Endothelial cell of umbilical vein (primary cell): ENCODE measurements at regions of chr2 and their contacts with region 1.

Region 1: GRCh38 chr2:145007093-145007959 is 487.4 kb upstream of the ZEB2 start:
- DNase-seq: peak; percentile 91
- H3K4me3 ChIP-seq: peak overlapping the region in 1 of 3 experiments; percentile 3
- H3K27ac ChIP-seq: peak overlapping the region; percentile 80
- H3K4me1 ChIP-seq: peaks cover 38% of the 10 kb centered on the region
- H3K27me3 ChIP-seq: no peaks in the 10 kb centered on the region
- CTCF ChIP-seq: no peak
- POLR2A ChIP-seq: no peak

Region 2: DNA sequence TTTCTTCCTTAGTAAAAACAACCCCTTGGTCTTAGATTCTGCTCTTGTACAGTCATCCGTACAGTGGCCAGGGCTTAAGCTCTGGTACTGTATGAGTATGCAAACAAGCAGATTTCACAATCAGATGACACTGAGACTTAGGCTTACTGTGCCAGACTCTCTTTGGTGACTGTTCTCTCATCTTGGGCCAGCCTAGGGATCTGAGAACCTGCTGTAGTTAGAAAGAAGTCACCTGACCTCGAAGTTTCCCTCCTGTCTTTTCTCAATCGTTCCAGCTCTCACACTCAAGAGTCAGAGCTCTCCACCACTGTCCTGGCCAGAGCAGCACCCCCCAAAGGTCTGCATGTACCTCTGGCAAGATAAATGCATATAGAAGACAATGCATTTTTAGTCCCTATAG is 550.6 kb before region 1 on chr2:
- CTCF ChIA-PET with region 1: no interaction called
- POLR2A ChIA-PET with region 1: no interaction called
- dilution Hi-C with region 1: no loop called
- intact Hi-C with region 1: loop called (anchors 10 kb)
- DNase-seq: peak; percentile 64
- H3K4me3 ChIP-seq: no peak overlapping the region
- H3K27ac ChIP-seq: no peak overlapping the region
- H3K4me1 ChIP-seq: peaks cover 69% of the 10 kb centered on the region
- H3K27me3 ChIP-seq: no peaks in the 10 kb centered on the region
- CTCF ChIP-seq: no peak
- POLR2A ChIP-seq: no peak

Region 3: GRCh38 chr2:144943986-144944385 is 63.3 kb before region 1 on chr2:
- CTCF ChIA-PET with region 1: no interaction called
- POLR2A ChIA-PET with region 1: no interaction called
- dilution Hi-C with region 1: no loop called
- intact Hi-C with region 1: loop called (anchors 1 kb)
- DNase-seq: peak; percentile 78
- H3K4me3 ChIP-seq: no peak overlapping the region
- H3K27ac ChIP-seq: peak overlapping the region; percentile 95
- H3K4me1 ChIP-seq: peaks cover 49% of the 10 kb centered on the region
- H3K27me3 ChIP-seq: no peaks in the 10 kb centered on the region
- CTCF ChIP-seq: no peak
- POLR2A ChIP-seq: no peak

Region 4: GRCh38 chr2:145026456-145027455 is 19.4 kb after region 1 on chr2:
- CTCF ChIA-PET with region 1: no interaction called
- POLR2A ChIA-PET with region 1: no interaction called
- dilution Hi-C with region 1: no loop called
- intact Hi-C with region 1: no loop called
- DNase-seq: no peak
- H3K4me3 ChIP-seq: no peak overlapping the region
- H3K27ac ChIP-seq: no peak overlapping the region
- H3K4me1 ChIP-seq: no peaks in the 10 kb centered on the region
- H3K27me3 ChIP-seq: no peaks in the 10 kb centered on the region
- CTCF ChIP-seq: no peak
- POLR2A ChIP-seq: no peak

Region 5: GRCh38 chr2:145055651-145056050 is 48.3 kb after region 1 on chr2:
- CTCF ChIA-PET with region 1: no interaction called
- POLR2A ChIA-PET with region 1: no interaction called
- dilution Hi-C with region 1: no loop called
- intact Hi-C with region 1: no loop called
- DNase-seq: no peak
- H3K4me3 ChIP-seq: no peak overlapping the region
- H3K27ac ChIP-seq: no peak overlapping the region
- H3K4me1 ChIP-seq: no peaks in the 10 kb centered on the region
- H3K27me3 ChIP-seq: no peaks in the 10 kb centered on the region
- CTCF ChIP-seq: no peak
- POLR2A ChIP-seq: no peak

Region 6: DNA sequence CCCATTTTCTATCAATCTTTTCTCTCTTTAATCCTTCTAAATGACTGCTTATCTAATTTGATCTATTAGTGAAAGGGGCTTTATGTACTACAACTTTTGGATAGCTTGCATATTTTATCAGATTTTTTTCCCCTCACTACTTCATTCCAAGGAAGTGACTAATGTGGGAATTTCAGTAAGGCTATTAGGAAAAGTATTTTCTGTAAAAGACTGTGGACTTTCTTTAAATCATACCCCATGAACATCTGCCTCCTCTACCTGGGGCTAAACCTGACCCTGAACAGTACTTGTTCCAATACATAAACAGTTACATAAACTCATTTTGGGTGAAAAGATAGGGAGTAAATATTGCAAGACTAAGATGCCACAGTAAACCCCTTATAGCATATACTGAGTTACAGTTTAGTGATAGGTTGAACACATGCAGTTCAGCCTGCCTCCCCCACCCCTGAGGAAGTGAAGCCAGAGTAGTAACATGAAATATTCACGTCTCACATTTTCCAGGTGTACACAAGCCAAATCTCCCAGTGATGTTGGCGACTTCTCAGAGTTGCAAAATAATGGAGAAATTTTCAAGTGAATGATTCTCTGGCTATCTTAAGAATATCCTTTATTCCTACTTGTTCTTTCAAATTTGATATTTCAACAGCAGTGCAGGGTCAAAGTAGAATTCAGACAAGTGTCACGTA is 103.5 kb after region 1 on chr2:
- CTCF ChIA-PET with region 1: no interaction called
- POLR2A ChIA-PET with region 1: no interaction called
- dilution Hi-C with region 1: no loop called
- intact Hi-C with region 1: loop called (anchors 5 kb)
- DNase-seq: peak; percentile 68
- H3K4me3 ChIP-seq: no peak overlapping the region
- H3K27ac ChIP-seq: peak overlapping the region; percentile 47
- H3K4me1 ChIP-seq: peaks cover 10% of the 10 kb centered on the region
- H3K27me3 ChIP-seq: no peaks in the 10 kb centered on the region
- CTCF ChIP-seq: no peak
- POLR2A ChIP-seq: no peak

Region 7: GRCh38 chr2:145123606-145124005 is 116.3 kb after region 1 on chr2:
- CTCF ChIA-PET with region 1: no interaction called
- POLR2A ChIA-PET with region 1: no interaction called
- dilution Hi-C with region 1: no loop called
- intact Hi-C with region 1: no loop called
- DNase-seq: no peak
- H3K4me3 ChIP-seq: no peak overlapping the region
- H3K27ac ChIP-seq: no peak overlapping the region
- H3K4me1 ChIP-seq: no peaks in the 10 kb centered on the region
- H3K27me3 ChIP-seq: no peaks in the 10 kb centered on the region
- CTCF ChIP-seq: no peak
- POLR2A ChIP-seq: no peak

Region 8: GRCh38 chr2:145235312-145235711 is 228.0 kb after region 1 on chr2:
- CTCF ChIA-PET with region 1: no interaction called
- POLR2A ChIA-PET with region 1: no interaction called
- dilution Hi-C with region 1: no loop called
- intact Hi-C with region 1: no loop called
- DNase-seq: no peak
- H3K4me3 ChIP-seq: no peak overlapping the region
- H3K27ac ChIP-seq: no peak overlapping the region
- H3K4me1 ChIP-seq: no peaks in the 10 kb centered on the region
- H3K27me3 ChIP-seq: no peaks in the 10 kb centered on the region
- CTCF ChIP-seq: no peak
- POLR2A ChIP-seq: no peak

Region 9: GRCh38 chr2:145380436-145381017 is 373.2 kb after region 1 on chr2:
- CTCF ChIA-PET with region 1: no interaction called
- POLR2A ChIA-PET with region 1: no interaction called
- dilution Hi-C with region 1: no loop called
- intact Hi-C with region 1: loop called (anchors 10 kb)
- DNase-seq: peak; percentile 74
- H3K4me3 ChIP-seq: no peak overlapping the region
- H3K27ac ChIP-seq: no peak overlapping the region
- H3K4me1 ChIP-seq: peaks cover 2% of the 10 kb centered on the region
- H3K27me3 ChIP-seq: no peaks in the 10 kb centered on the region
- CTCF ChIP-seq: no peak
- POLR2A ChIP-seq: no peak